ENCODE measurements at regions of chr6 and their contacts with region 1.

Region 1: GRCh38 chr6:127971945-127972391 is 71.1 kb upstream of the THEMIS start:
- DNase-seq: peak; percentile 89
- H3K4me3 Mint-ChIP-seq: peak overlapping the region; percentile 87
- H3K27ac Mint-ChIP-seq: peak overlapping the region; percentile 96
- H3K4me1 Mint-ChIP-seq: peaks cover 48% of the 10 kb centered on the region
- H3K27me3 Mint-ChIP-seq: no peaks in the 10 kb centered on the region

Region 2: DNA sequence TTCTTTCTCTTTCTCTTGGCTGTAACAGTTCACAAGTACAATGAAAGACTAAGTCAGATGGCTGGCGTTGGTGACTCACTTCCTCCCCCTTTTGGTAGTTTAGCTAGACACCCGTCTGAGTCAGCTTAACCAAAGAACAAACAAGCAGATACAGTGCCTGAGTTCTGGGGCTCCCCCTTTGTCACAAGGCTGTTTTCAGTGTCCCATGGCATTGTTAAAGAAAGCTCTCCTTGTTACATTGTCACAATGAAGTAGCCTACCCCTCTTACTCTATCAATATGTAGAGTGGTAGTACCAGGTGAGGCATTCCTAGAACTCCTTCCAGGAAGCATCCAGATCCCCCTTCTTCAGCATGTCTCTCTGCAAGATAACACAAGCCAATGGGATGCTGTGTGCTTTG is 551.4 kb before region 1 on chr6:
- intact Hi-C with region 1: loop called (anchors 1 kb)
- DNase-seq: peak; percentile 92
- H3K4me3 Mint-ChIP-seq: peak overlapping the region; percentile 51
- H3K27ac Mint-ChIP-seq: peak overlapping the region; percentile 86
- H3K4me1 Mint-ChIP-seq: peaks cover 12% of the 10 kb centered on the region
- H3K27me3 Mint-ChIP-seq: no peaks in the 10 kb centered on the region

Region 3: DNA sequence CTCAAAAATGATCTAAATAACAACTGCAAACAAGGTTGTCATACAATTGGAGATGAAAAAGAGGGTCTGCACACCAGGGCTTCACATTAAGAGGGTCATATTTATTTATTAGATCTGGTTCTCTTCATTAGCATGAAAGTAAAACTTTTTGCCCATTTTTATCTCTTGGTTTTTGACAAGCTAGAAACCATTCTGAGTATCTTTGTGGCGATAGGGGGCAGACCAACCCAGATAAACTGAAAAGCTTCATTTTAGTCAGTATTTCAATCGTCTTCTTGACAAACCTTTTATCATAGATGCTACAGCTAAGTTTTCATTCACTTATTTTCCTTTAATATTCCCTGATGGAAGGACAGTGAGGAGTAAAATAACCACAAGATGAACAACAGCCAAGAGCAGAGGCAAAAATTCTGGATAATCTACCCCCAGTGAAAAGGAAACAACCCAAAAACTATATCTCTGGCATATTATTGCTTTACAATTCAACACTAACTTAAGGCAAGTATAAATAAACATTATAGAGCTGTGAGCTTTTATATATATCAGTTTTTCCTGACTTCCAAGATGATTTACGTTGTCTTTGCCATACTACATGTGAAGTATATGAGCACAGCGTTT is 116.3 kb before region 1 on chr6:
- intact Hi-C with region 1: loop called (anchors 2 kb)
- DNase-seq: peak; percentile 79
- H3K4me3 Mint-ChIP-seq: no peak overlapping the region
- H3K27ac Mint-ChIP-seq: peak overlapping the region; percentile 42
- H3K4me1 Mint-ChIP-seq: peaks cover 37% of the 10 kb centered on the region
- H3K27me3 Mint-ChIP-seq: no peaks in the 10 kb centered on the region

Region 4: DNA sequence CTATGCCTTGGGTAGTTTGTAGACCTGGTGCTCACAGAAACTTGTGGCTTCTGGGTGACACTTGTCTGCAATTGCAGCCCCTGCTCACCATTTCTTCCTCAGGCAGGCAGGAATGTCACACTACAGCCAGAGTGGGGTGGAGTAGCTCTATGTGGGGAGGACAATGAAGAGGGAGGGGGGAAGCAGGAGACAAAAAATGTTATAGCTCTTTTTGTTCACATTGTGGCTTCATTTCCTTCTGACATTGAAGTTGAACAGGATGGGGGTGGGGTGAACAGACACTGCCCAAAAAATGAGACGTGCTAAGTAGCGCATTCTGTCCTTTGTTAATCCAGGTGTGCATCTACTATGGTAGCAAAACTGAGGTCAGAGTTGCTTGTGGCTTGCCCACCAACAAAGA is 71.0 kb before region 1 on chr6 and contains the start of gene THEMIS:
- intact Hi-C with region 1: loop called (anchors 1 kb)
- DNase-seq: peak; percentile 88
- H3K4me3 Mint-ChIP-seq: peak within 1 kb of the TSS; percentile 90
- H3K27ac Mint-ChIP-seq: peak within 1 kb of the TSS; percentile 95
- H3K4me1 Mint-ChIP-seq: peaks cover 51% of the 10 kb centered on the region
- H3K27me3 Mint-ChIP-seq: no peaks in the 10 kb centered on the region
- total RNA-seq, gene THEMIS: 14.3 and 15.3 TPM in 2 replicates

Region 5: DNA sequence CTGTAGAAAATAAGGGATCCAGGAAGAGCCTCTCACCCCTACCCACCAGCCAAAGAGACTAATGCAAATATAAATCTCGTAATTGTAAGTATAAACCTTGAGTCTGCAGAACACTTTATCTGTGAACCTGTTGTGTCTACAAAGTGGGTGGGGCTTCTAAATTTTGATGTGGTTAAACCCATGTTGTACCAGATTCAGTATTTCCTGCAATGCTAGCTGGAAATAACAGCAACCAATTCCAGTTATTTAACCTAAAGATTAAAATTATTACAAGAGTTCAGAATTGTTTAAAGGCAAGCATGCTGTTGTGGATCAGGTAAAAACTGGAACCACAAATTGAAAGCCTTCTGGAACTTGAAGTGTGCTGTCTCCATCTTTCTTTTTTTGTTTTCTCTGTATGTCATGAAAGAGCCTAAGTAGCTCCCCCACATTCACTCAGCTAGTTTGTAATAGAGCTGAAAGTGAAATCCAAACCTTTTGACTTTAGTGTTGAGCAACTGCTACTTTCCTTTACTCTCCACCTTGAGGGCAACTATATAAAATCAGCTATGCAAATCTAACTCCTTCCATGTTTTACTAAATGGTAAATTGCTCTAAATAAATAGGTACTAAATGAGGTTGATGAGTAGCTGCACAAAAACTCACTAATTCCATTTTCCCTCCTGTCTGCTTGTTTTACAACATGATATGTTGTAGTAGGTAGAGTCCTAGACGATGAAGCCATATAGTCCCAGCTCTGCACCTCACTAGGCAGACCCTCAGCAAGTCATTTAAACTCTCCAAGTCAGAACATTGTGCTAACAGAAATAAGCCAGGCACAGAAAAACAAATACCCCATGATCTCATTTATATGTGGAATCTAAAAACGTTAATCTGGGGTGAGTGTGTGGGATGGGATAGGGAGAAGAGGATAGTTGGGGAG is 53.2 kb before region 1 on chr6:
- intact Hi-C with region 1: loop called (anchors 1 kb)
- DNase-seq: peak; percentile 79
- H3K4me3 Mint-ChIP-seq: peak overlapping the region; percentile 52
- H3K27ac Mint-ChIP-seq: peak overlapping the region; percentile 61
- H3K4me1 Mint-ChIP-seq: peaks cover 55% of the 10 kb centered on the region
- H3K27me3 Mint-ChIP-seq: no peaks in the 10 kb centered on the region

Region 6: GRCh38 chr6:127951172-127951917 is 20.6 kb before region 1 on chr6:
- intact Hi-C with region 1: loop called (anchors 1 kb)
- DNase-seq: peak; percentile 67
- H3K4me3 Mint-ChIP-seq: peak overlapping the region; percentile 67
- H3K27ac Mint-ChIP-seq: peak overlapping the region; percentile 95
- H3K4me1 Mint-ChIP-seq: peaks cover 56% of the 10 kb centered on the region
- H3K27me3 Mint-ChIP-seq: no peaks in the 10 kb centered on the region

Region 7: DNA sequence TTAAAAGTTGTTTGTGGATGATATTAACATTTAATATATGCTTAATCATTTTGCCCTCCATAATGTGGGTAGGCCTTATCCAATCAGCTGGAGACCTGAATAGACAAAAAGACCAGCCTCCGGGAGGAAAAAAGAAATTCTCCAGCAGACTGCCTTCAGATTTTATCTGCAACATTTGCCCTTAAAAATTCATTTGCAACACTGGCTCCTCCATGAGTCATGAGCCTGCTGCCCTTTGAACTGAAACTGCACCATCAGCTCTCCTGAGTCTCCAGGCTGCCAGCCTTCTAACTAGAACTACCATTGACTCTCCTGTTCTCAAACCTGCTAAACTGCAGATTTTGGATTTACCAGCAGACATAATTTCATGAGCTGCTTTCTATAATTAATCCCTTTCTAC is 152.7 kb after region 1 on chr6:
- intact Hi-C with region 1: no loop called
- DNase-seq: no peak
- H3K4me3 Mint-ChIP-seq: no peak overlapping the region
- H3K27ac Mint-ChIP-seq: no peak overlapping the region
- H3K4me1 Mint-ChIP-seq: peaks cover 8% of the 10 kb centered on the region
- H3K27me3 Mint-ChIP-seq: no peaks in the 10 kb centered on the region

Region 8: GRCh38 chr6:128259730-128260685 is 288.0 kb after region 1 on chr6:
- intact Hi-C with region 1: loop called (anchors 10 kb)
- DNase-seq: no peak
- H3K4me3 Mint-ChIP-seq: peak overlapping the region; percentile 48
- H3K27ac Mint-ChIP-seq: peak overlapping the region; percentile 69
- H3K4me1 Mint-ChIP-seq: peaks cover 22% of the 10 kb centered on the region
- H3K27me3 Mint-ChIP-seq: peaks cover 2% of the 10 kb centered on the region

Region 9: DNA sequence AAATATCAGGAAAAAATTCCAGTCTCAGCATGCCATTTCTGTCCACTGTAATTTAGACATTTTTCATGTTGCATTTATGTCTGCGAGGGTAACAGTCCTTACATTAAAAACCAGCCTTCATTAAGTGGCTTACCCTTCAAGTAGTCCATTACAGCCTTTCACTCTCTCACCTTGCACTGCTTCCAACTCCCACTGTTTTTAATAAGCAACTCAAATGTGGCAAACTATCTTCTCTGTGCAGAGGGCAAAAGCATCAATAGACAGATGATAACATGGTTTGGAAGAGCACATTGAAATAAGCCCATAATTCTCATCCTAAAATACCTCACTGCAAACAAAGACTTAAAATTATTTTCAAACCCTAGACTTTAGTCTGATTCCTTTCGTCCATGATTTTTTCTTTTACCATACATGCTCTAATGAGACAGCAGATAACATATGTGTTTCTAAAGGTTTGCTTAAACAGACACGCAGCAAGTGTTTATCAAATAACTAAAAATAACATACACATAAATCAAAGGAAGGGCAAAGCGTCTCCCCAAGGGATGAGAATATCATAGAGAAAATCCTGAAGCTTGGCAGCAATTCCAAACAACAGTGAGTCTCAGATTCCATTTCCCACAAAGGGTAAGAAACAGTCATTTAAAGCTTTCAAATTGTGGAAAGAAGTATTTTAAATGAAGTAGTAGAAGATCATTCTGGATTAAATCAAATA is 418.0 kb after region 1 on chr6:
- intact Hi-C with region 1: no loop called
- DNase-seq: no peak
- H3K4me3 Mint-ChIP-seq: no peak overlapping the region
- H3K27ac Mint-ChIP-seq: no peak overlapping the region
- H3K4me1 Mint-ChIP-seq: no peaks in the 10 kb centered on the region
- H3K27me3 Mint-ChIP-seq: no peaks in the 10 kb centered on the region

Measured in activated CD4-positive, alpha-beta T cell treated with anti-CD3 and anti-CD28 coated beads, Interleukin-2, amount 10 ng/mL, durations not matched to agents 24 days and 14 days (primary cell).